PC-3 (cell line): ENCODE measurements at regions of chr1 and their contacts with region 1.

Region 1: GRCh38 chr1:7224644-7225043 is 439.4 kb downstream of the CAMTA1 start:
- DNase-seq: peak; percentile 5
- ATAC-seq: no peak
- H3K4me3 ChIP-seq: no peak overlapping the region
- H3K27ac ChIP-seq: no peak overlapping the region
- H3K4me1 ChIP-seq: peaks cover 14% of the 10 kb centered on the region
- H3K27me3 ChIP-seq: no peaks in the 10 kb centered on the region
- CTCF ChIP-seq: peak; percentile 25; the same call in 1 of the 2 replicates

Region 2: DNA sequence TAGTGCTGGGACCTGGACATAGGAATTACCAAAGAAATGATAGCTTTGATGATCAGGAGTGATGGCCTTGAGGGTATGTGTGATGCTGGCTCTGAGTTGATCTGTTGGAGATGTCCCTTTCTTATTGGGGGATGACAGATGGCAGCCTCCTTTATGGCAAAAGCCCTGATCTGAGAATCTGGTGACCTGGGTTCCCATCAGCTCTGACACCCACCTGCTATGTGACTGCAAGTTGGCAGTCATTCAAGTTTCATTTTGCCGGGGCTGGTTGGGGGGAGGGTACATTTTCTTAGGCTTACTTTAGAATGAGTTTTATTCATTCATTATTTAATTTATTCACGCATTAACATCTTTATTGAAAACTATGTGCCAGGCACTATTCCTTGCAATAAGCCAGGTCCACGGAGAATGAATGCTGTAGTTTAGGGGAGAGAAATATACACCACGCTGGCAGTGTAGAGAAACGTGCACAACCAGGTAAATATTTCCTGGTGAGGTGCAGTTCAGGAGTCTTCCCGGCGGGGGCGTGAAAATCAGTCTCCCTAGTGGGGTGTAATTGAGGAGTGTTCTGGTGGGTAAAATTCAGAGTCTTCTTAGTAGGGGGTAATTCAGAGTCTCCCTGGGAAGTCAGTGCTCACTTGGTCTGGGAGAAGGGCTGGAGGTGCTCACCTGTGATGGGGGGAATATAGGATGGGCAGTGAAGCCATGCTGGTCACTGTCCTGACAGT is 38.1 kb before region 1 on chr1:
- CTCF ChIA-PET with region 1: no interaction called
- POLR2A ChIA-PET with region 1: no interaction called
- intact Hi-C with region 1: no loop called
- DNase-seq: no peak
- ATAC-seq: no peak
- H3K4me3 ChIP-seq: no peak overlapping the region
- H3K27ac ChIP-seq: no peak overlapping the region
- H3K4me1 ChIP-seq: no peaks in the 10 kb centered on the region
- H3K27me3 ChIP-seq: peaks cover 23% of the 10 kb centered on the region; the same call in 1 of the 2 replicates
- CTCF ChIP-seq: peak; percentile 23; the same call in 1 of the 2 replicates

Region 3: DNA sequence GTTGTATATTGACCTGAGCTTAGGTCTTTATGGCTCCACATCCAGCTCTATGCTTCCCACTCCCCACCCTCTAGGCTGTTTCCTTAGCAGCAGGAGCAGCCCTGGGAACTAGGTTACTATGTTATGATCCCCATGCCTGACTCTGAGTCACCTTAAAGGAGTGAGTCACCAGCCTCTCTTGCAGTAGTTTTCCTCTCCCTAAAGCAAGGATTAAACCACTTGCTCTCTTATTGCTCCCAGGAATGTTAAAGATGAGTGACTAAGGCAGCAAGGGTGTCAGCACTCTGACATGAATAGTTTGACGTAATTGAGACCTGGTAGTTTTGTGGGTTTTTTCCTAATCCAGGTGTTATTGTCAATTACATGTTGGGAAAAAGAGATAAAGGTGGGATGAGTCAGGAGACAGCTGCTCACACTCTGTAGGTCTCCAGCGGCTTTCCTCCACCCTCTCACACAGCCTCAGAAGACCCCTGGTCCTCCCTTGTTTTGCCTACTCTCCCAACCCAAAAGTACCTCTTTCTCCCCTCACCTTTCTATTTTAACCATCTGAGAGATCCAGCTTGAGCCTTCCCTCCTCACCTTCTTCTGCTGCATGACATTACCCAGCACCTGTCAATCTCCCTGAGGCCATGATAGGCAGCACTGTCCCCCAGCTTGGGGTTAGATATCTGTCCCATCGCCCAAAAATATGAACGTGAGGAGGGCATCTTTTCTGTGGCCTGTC is 177.3 kb after region 1 on chr1:
- CTCF ChIA-PET with region 1: no interaction called
- POLR2A ChIA-PET with region 1: no interaction called
- intact Hi-C with region 1: loop called (anchors 10 kb)
- DNase-seq: peak; percentile 95
- ATAC-seq: peak; percentile 99
- H3K4me3 ChIP-seq: no peak overlapping the region
- H3K27ac ChIP-seq: peak overlapping the region; percentile 92
- H3K4me1 ChIP-seq: peaks cover 16% of the 10 kb centered on the region
- H3K27me3 ChIP-seq: no peaks in the 10 kb centered on the region
- CTCF ChIP-seq: no peak